ENCODE measurements at regions of chr3 and their contacts with region 1.

Region 1: DNA sequence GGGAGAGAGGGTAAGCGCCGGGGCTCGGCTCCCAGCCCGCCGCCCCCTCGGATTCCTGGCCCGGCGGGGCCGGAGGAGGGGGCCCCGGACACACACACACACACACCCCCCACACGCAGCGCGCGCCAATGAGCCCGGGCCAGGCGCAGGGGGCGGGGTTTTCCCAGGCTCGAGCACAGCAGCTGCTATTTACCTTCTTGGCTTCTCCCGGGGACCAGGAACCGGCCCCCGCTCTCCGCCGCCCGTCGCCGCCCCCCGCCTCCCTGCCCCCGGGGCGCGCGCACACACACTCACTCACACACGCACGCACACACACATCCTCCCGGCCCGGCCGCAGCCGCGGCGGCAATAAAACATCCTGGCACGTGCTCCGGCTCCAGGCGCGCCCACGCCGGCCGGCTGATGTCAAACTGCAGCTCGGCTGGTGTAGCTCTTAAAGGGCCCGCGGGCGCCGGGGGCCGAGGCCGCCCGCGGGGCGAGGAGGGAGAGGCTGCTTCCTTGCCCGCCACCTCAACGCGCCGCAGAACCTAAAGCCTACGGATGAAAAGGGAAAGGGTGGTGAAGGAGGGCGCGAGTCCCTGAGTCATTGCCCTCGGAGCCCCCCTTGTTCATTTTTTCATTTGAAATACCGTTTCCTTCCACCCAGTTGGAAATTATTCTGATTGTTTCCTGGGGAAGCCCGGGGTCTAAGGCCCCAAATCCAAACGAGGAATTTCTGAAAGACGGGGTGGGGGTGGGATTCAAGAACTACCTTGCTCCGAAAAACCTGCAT is 1.0 kb upstream of the HES1 start:
- DNase-seq: peak; percentile 94
- H3K4me3 Mint-ChIP-seq: peak overlapping the region; percentile 90
- H3K27ac Mint-ChIP-seq: peak overlapping the region; percentile 95
- H3K4me1 Mint-ChIP-seq: peaks cover 53% of the 10 kb centered on the region
- H3K27me3 Mint-ChIP-seq: peaks cover 76% of the 10 kb centered on the region

Region 2: DNA sequence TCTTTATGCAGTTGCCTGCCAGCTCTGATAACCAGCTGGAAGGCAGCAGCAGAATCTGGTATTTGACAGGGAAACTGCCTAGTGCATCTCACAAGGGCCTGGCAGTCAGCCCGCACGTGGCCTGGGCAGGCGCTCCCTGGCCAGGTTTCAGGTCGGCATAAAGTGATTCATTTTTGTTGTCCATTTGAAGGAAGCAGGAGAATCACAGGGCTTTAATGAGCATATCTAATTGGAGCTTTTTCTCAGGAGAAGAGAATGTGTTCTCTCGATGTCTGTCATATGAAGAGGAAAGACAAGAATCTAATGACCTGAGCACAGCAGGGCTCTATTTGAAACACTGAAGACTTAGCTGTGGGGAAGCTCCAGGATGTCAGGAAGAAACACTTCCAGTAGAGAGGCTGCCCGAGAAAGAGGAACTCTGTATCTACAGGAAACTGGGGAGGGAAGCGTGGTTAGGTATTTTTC is 1118.5 kb before region 1 on chr3:
- intact Hi-C with region 1: no loop called
- DNase-seq: no peak
- H3K4me3 Mint-ChIP-seq: no peak overlapping the region
- H3K27ac Mint-ChIP-seq: no peak overlapping the region
- H3K4me1 Mint-ChIP-seq: peaks cover 2% of the 10 kb centered on the region
- H3K27me3 Mint-ChIP-seq: peaks cover 4% of the 10 kb centered on the region

Region 3: GRCh38 chr3:193665370-193665989 is 469.5 kb before region 1 on chr3:
- intact Hi-C with region 1: loop called (anchors 10 kb)
- DNase-seq: no peak
- H3K4me3 Mint-ChIP-seq: no peak overlapping the region
- H3K27ac Mint-ChIP-seq: no peak overlapping the region
- H3K4me1 Mint-ChIP-seq: peaks cover 3% of the 10 kb centered on the region
- H3K27me3 Mint-ChIP-seq: no peaks in the 10 kb centered on the region

Region 4: GRCh38 chr3:194070634-194071409 is 64.1 kb before region 1 on chr3:
- intact Hi-C with region 1: loop called (anchors 2 kb)
- DNase-seq: peak; percentile 88
- H3K4me3 Mint-ChIP-seq: peak overlapping the region; percentile 63
- H3K27ac Mint-ChIP-seq: no peak overlapping the region
- H3K4me1 Mint-ChIP-seq: peaks cover 15% of the 10 kb centered on the region
- H3K27me3 Mint-ChIP-seq: peaks cover 72% of the 10 kb centered on the region

Region 5: DNA sequence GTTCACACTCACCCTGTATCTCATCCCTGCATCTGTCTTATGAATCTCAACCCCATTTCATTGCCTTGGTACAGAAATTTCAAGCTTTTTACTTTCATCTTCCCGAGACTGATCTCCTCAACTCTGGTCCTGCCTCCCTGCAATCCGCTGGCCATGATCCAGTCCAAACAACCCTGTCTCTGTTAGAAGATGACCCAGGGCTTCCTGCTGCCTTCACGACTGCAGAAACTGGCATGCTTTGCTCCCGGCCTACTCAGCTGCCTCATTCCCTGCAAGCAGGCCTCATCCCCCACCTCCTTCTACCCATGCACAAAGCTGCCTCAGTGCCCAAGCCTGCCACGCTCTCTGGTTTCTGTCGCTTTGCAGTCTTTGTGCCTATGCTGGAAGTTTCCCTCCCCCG is 13.4 kb after region 1 on chr3:
- intact Hi-C with region 1: no loop called
- DNase-seq: no peak
- H3K4me3 Mint-ChIP-seq: no peak overlapping the region
- H3K27ac Mint-ChIP-seq: no peak overlapping the region
- H3K4me1 Mint-ChIP-seq: no peaks in the 10 kb centered on the region
- H3K27me3 Mint-ChIP-seq: peaks cover 34% of the 10 kb centered on the region

Region 6: DNA sequence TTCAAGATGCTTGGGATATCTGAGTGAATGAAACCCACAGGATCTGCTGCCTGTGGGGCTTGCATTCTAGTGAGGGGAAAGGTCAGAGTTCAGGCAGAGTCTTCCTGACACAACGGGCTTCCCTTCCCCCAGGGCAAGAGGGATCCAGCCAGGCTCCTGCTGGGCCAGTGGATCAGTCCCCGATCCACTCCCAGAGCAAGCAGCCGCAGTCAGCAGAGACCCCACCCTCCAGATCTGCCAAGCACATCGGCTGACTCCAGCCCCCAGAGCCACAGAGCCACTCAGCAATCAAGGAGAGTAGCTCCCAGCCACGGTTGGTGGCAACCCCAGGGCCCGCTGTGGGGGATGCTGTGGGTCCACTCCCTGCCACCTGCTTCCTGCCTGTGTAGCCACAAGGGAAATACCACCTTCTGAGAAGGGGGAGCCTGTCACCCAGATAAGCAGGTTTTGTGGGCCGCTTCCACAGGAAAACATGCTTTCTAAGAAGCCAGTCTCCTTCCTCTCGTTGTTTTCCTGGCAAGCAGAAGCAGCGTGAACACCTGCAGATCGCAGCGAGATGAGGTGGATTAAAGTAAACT is 171.3 kb after region 1 on chr3:
- intact Hi-C with region 1: loop called (anchors 2 kb)
- DNase-seq: peak; percentile 90
- H3K4me3 Mint-ChIP-seq: peak overlapping the region; percentile 74
- H3K27ac Mint-ChIP-seq: peak overlapping the region; percentile 84
- H3K4me1 Mint-ChIP-seq: peaks cover 50% of the 10 kb centered on the region
- H3K27me3 Mint-ChIP-seq: no peaks in the 10 kb centered on the region

Region 7: DNA sequence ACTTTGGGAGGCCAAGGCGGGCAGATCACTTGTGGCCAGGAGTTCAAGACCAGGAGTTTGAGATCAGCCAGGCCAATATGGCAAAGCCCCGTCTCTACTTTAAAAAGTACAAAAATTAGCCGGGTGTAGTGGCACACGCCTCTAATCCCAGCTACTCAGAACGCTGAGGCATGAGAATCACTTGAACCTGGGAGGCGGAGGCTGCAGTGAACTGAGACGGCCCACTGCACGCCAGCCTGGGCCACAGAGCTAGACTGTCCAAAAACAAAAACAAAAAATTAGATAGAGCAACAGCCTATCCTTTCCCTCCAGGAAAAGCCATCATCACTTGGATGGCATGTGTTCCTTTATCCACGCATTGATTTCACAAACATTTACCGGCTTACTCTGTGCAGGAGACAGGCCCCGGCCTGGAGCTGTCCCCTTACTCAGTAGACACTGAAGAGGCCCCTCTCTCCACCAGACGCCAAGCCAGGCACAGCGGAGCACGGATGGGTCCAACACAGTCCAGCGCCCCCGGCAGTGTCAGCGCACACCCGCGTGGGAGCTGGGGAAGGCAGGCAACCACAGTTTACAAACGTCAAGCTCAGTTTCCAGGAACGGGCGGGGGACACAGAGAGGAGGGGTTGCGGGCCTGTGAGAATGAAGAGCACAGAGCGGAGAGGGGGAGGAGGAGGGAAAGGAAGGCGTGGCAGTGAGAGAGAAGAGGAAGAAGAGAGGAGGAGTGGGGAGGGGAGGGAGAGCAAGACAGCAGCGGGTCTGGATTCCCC is 261.0 kb after region 1 on chr3:
- intact Hi-C with region 1: loop called (anchors 2 kb)
- DNase-seq: peak; percentile 92
- H3K4me3 Mint-ChIP-seq: peak overlapping the region; percentile 82
- H3K27ac Mint-ChIP-seq: peak overlapping the region; percentile 78
- H3K4me1 Mint-ChIP-seq: peaks cover 47% of the 10 kb centered on the region
- H3K27me3 Mint-ChIP-seq: peaks cover 23% of the 10 kb centered on the region

Region 8: DNA sequence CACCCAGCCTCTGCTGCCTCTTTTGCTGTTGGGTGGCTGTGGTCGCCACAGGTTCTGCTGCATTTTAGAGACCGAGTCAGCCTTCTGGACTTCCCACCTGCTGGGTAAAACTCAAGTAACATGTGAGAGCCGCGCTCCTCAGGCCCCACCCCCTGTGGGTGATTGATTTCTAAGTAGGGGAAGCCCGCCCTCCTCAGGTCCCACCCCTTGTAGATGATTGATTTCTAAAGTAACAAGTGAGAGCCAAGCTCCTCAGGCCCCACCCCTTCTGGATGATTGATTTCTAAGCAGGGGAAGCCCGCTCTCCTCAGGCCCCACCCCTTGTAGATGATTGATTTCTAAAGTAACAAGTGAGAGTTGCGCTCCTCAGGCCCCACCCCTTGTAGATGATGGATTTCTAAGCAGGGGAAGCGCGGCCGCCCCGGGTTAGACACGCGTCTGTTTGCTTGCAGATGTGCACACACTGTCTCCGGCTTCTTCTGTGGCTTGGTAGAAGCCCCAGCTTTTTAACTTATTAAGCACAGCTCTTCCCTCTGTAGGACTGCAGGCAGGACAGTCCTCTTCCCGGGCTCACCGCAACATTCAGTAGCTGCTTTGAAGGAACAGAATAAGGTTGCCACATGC is 634.2 kb after region 1 on chr3:
- intact Hi-C with region 1: loop called (anchors 10 kb)
- DNase-seq: peak; percentile 96
- H3K4me3 Mint-ChIP-seq: peak overlapping the region; percentile 80
- H3K27ac Mint-ChIP-seq: peak overlapping the region; percentile 83
- H3K4me1 Mint-ChIP-seq: peaks cover 10% of the 10 kb centered on the region
- H3K27me3 Mint-ChIP-seq: peaks cover 31% of the 10 kb centered on the region